CD4-positive, alpha-beta memory T cell (primary cell): ENCODE measurements at regions of chr2 and their contacts with region 1.

Region 1: DNA sequence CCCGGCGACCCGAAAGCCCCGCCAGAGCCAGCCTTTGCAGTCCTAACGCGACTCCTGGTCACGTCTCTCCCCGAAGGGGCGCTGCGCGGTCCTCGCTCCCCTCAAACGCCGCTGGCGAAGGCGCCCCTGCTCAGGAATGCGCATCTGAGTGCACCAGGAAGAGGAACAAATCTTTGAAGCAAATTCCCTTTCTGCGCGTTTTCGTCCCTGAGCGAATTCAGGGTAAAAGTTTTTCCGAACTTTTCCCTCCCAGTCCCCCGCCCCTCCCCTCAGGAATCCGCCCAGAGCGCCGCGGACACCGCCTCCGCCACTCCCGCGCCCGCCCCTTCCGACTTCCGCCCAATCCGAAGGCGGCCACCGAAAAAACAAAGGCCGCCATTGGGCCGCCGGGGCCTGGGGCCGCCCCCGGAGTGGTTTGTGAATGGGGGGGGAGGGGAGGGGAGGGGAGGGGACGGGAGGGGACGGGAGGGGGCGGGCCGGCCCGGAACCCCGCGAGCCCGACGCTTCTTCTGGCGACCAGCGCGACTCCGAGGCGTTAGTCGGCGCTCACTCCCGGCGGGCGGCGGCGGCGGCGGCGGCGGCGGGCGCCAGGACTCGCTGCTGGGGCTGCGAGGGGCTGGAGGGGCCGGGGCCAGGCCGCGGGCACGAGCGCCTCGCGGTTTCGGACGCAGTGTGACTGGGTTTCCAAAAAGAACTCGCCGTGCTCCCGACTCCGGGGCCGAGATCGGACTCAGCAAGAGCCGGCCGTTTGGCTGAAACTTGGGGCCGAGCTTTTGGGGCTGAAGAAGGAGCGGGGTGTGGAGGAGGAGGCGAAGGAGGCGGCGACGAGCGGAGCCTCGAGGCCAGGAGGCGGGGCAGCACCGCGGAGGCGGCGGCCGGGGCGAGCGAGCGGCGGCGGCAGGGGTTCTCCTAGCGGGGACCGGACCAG is at the start of gene FZD7:
- DNase-seq: peak; percentile 80 to 86 (median 82)
- H3K4me3 ChIP-seq: peak within 1 kb of the TSS; percentile 67 to 91
- H3K4me3 Mint-ChIP-seq: peak within 1 kb of the TSS; percentile 91 to 96 (median 93)
- H3K27ac ChIP-seq: peak within 1 kb of the TSS; percentile 15
- H3K27ac Mint-ChIP-seq: peak within 1 kb of the TSS; percentile 79 to 91 (median 84)
- H3K4me1 ChIP-seq: peaks cover 21% of the 10 kb centered on the region
- H3K4me1 Mint-ChIP-seq: peaks cover 8 to 15% (median 10%) of the 10 kb centered on the region in 4 donors
- H3K27me3 ChIP-seq: peaks cover 27% of the 10 kb centered on the region
- H3K27me3 Mint-ChIP-seq: peaks cover 6 to 7% of the 10 kb centered on the region in 2 donors
- total RNA-seq, gene FZD7: 0.47 to 0.61 TPM

Region 2: DNA sequence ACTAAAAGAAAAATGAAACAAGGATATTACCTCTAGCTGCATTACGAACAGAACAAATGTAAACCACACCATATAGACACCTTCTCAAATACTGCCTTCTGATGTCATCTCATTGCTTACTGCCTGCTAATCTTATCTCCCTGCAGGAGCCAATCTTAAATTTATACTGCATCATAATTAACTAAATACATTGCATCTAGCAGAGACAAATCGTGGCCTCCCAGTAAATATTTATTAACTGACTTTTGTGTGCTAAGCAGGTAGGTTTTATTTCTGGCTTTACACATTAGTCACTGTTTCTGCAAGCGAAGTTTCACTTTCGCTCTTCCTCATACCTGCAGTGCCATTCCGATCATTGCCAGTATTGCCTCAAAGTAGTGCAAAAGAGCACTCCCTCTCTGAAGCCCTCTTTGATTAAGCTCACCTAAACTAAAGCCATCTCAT is 1659.6 kb before region 1 on chr2:
- CTCF ChIA-PET with region 1: no interaction called
- POLR2A ChIA-PET with region 1: no interaction called
- intact Hi-C with region 1: loop called (anchors 10 kb)
- DNase-seq: peak; percentile 52 to 62 (median 58)
- H3K4me3 ChIP-seq: peak overlapping the region; percentile 31 to 34
- H3K4me3 Mint-ChIP-seq: peak overlapping the region; percentile 82 to 93 (median 86)
- H3K27ac ChIP-seq: peak overlapping the region; percentile 48
- H3K27ac Mint-ChIP-seq: peak overlapping the region; percentile 75 to 96 (median 94)
- H3K4me1 ChIP-seq: peaks cover 47% of the 10 kb centered on the region
- H3K4me1 Mint-ChIP-seq: peaks cover 28 to 55% (median 43%) of the 10 kb centered on the region in 4 donors
- H3K27me3 ChIP-seq: no peaks in the 10 kb centered on the region
- H3K27me3 Mint-ChIP-seq: no peaks in the 10 kb centered on the region

Region 3: GRCh38 chr2:201642579-201643215 is 390.9 kb before region 1 on chr2:
- CTCF ChIA-PET with region 1: no interaction called
- POLR2A ChIA-PET with region 1: no interaction called
- intact Hi-C with region 1: loop called (anchors 2 kb)
- DNase-seq: peak; percentile 83 to 91 (median 89)
- H3K4me3 ChIP-seq: peak overlapping the region; percentile 92 to 97
- H3K4me3 Mint-ChIP-seq: peak overlapping the region; percentile 89 to 99 (median 96)
- H3K27ac ChIP-seq: peak overlapping the region; percentile 83
- H3K27ac Mint-ChIP-seq: peak overlapping the region; percentile 95 to 100 (median 96)
- H3K4me1 ChIP-seq: no peaks in the 10 kb centered on the region
- H3K4me1 Mint-ChIP-seq: peaks cover 7 to 23% (median 7%) of the 10 kb centered on the region in 4 donors
- H3K27me3 ChIP-seq: no peaks in the 10 kb centered on the region
- H3K27me3 Mint-ChIP-seq: no peaks in the 10 kb centered on the region

Region 4: DNA sequence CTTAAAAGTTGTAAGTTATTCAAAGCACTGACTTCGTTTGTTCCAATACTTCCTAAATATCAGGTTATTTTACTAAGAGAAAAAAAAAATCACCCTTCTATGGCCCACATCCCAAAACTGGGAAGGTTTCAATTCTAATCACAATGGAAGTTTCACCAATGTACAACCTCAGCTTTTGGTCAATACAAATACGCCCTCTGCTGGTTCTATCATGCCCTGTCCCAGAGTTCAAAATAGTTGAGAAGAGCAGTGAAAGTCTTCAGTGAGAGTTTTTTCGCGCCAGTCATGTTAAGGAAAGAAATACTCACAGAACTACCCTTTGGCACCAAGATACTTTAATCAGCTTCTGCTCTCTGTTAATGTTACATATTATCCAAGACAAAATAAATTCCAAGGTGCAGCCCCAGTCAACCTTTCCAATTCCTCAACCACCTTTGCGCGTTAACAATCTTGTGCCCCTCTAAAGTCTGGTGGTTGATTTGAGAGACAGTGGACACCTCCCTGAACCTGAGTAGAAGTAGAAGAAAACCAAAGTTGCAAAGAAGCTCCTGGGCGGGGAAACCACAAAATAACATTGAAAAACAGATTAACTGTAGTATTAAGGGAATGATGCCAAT is 144.9 kb after region 1 on chr2:
- CTCF ChIA-PET with region 1: no interaction called
- POLR2A ChIA-PET with region 1: no interaction called
- intact Hi-C with region 1: loop called (anchors 2 kb)
- DNase-seq: peak; percentile 43 to 57 (median 55)
- H3K4me3 ChIP-seq: no peak overlapping the region
- H3K4me3 Mint-ChIP-seq: no peak overlapping the region
- H3K27ac ChIP-seq: no peak overlapping the region
- H3K27ac Mint-ChIP-seq: no peak overlapping the region
- H3K4me1 ChIP-seq: no peaks in the 10 kb centered on the region
- H3K4me1 Mint-ChIP-seq: peaks cover 0 to 4% (median under 1%) of the 10 kb centered on the region in 4 donors
- H3K27me3 ChIP-seq: no peaks in the 10 kb centered on the region
- H3K27me3 Mint-ChIP-seq: peaks cover 5 to 8% of the 10 kb centered on the region in 2 donors

Region 5: DNA sequence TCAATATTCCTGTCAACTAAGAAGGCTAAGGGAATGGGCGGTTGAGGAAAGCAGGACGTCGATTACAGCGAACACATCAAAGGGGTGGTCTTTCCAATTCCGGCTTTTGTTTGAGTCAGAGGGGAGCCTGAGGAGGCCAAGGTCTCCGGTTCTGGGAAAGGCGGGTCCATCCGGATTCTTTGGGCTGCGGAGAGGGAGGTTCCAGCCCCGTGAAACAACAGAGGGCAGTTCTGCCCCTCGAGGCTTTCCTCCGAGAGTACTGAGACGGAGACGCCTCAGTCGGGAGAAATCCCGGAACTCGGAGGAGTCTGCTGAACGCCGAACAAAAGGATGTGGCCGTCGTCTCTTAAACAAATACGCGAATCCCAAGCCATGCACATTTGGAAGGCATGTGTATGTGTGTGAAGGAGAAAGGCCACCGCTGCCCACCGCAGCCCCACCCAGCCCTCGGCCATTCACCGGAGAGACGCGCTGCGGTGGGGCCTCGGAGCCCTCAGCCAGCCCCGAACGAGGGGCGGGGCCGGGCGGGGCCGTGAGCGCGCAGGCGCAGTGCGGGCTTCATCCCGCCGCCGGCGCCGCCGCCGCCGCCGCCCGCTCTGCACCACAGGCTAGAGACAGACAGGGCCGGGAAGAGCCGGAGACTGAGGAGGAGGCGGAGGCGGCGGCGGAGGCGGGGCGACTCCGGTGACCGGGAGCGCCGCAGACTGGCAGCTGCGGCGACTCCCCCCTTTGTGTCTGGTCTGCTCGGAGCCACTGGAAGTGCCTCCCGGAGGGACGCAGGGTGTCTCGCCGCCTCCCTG is 342.2 kb after region 1 on chr2 and contains the start of gene BMPR2:
- CTCF ChIA-PET with region 1: no interaction called
- POLR2A ChIA-PET with region 1: no interaction called
- intact Hi-C with region 1: loop called (anchors 5 kb)
- DNase-seq: peak; percentile 73 to 88 (median 81)
- H3K4me3 ChIP-seq: peak within 1 kb of the TSS; percentile 91 to 98
- H3K4me3 Mint-ChIP-seq: peak within 1 kb of the TSS; percentile 96 to 99 (median 99)
- H3K27ac ChIP-seq: peak within 1 kb of the TSS; percentile 76
- H3K27ac Mint-ChIP-seq: peak within 1 kb of the TSS; percentile 91 to 98 (median 95)
- H3K4me1 ChIP-seq: peaks cover 30% of the 10 kb centered on the region
- H3K4me1 Mint-ChIP-seq: peaks cover 21 to 43% (median 23%) of the 10 kb centered on the region in 4 donors
- H3K27me3 ChIP-seq: no peaks in the 10 kb centered on the region
- H3K27me3 Mint-ChIP-seq: no peaks in the 10 kb centered on the region
- total RNA-seq, gene BMPR2: 18.8 to 20.8 TPM